ENCODE measurements at regions of chr9 and their contacts with region 1.

Region 1: DNA sequence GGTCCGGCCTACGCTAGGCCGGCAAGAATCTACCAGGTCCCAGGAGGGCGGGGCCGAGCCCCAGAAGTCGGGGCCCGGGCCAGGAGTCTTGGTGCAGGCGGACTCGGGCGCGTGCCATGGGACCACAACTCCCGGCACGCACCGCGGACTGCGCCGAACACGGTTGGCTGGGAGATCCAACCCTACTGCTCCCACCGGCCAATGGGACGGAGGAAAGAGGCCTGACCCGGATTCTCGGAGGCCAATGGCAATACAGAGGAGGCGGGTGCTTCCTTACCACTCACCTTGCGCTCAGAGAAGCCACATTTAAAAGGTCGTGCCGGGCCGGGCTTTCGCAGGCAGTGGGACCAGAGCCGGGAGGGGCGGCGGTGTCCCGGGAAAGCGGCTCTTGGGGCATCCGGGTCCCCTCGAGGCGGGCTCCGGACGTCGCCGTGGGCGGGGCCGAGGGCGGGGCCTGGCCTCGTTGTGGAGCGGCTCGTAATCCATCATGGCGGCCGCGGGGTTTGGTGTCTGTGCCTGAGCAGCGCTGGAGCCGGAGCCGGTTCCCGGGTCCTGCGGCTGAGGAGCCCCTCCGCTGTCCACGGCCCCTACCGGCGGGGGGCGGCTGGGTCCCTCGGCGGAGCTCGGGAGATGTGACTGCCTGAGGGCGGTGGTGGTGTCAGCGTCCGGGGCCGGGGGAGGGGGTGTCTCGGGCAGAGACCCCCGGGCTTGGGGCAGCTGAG is 19.1 kb downstream of the EXOSC2 start:
- DNase-seq: peak; percentile 98 to 99 (median 99)
- ATAC-seq: peak; percentile 97 to 99 (median 98)
- H3K4me3 ChIP-seq: peak overlapping the region; percentile 56 to 100 (median 84)
- H3K27ac ChIP-seq: peak overlapping the region; percentile 93 to 99 (median 98)
- H3K4me1 ChIP-seq: peaks cover 0 to 48% (median 28%) of the 10 kb centered on the region in 12 donors
- H3K27me3 ChIP-seq: no peaks in the 10 kb centered on the region
- CTCF ChIP-seq: no peak
- POLR2A ChIP-seq: peak in 1 of 2 donors; percentile 80

Region 2: GRCh38 chr9:129110740-129111527 is 1601.8 kb before region 1 on chr9 and contains the starts of genes CRAT and PTPA:
- intact Hi-C with region 1: loop called in 1 of 10 experiments (anchors 5 kb)
- DNase-seq: peak; percentile 98 to 99 (median 99)
- ATAC-seq: peak; percentile 90 to 94 (median 91)
- H3K4me3 ChIP-seq: peak within 1 kb of the TSS; percentile 77 to 100 (median 88)
- H3K27ac ChIP-seq: peak within 1 kb of the TSS; percentile 91 to 100 (median 97)
- H3K4me1 ChIP-seq: peaks cover 0 to 51% (median 26%) of the 10 kb centered on the region in 12 donors
- H3K27me3 ChIP-seq: no peaks in the 10 kb centered on the region
- CTCF ChIP-seq: no peak
- POLR2A ChIP-seq: peak; percentile 98 to 99
- total RNA-seq, gene CRAT: 50.8 to 126 (median 68.2) TPM
- total RNA-seq, gene PTPA: 96.0 to 212 (median 172) TPM

Region 3: GRCh38 chr9:130660683-130661450 is 51.9 kb before region 1 on chr9:
- intact Hi-C with region 1: no loop called
- DNase-seq: no peak
- ATAC-seq: no peak
- H3K4me3 ChIP-seq: peak overlapping the region; percentile 13 to 53 (median 40)
- H3K27ac ChIP-seq: no peak overlapping the region
- H3K4me1 ChIP-seq: peaks cover 2 to 66% (median 41%) of the 10 kb centered on the region in 12 donors
- H3K27me3 ChIP-seq: peaks cover 75 to 100% (median 94%) of the 10 kb centered on the region in 9 donors
- CTCF ChIP-seq: no peak
- POLR2A ChIP-seq: no peak

Region 4: DNA sequence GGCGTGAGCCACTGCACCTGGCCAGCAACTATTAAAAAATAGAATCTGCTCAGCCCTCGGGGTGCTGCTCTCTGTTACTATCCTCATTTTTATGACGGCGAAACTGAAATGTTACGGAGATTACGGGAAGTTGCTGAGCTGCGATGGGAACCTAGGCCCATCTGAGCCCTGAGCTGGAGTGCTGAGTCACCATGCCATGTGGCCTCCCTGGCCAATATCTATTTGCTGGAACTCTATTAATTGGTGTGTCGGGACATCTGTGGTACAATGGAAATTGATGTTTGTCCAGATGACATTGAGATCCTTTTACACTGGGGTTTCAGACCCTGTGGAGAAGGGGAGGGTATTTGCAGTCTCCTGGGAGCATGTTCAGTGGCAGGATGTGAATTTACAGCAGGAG is 40.3 kb before region 1 on chr9:
- intact Hi-C with region 1: no loop called
- DNase-seq: no peak
- ATAC-seq: no peak
- H3K4me3 ChIP-seq: no peak overlapping the region
- H3K27ac ChIP-seq: no peak overlapping the region
- H3K4me1 ChIP-seq: no peaks in the 10 kb centered on the region
- H3K27me3 ChIP-seq: peaks cover 0 to 13% (median 10%) of the 10 kb centered on the region in 9 donors
- CTCF ChIP-seq: no peak
- POLR2A ChIP-seq: no peak

Region 5: GRCh38 chr9:130770679-130771442 is 58.1 kb after region 1 on chr9:
- intact Hi-C with region 1: loop called in 8 of 10 experiments (anchors 5 to 10 kb)
- DNase-seq: no peak
- ATAC-seq: peak; percentile 38 to 77 (median 76)
- H3K4me3 ChIP-seq: no peak overlapping the region
- H3K27ac ChIP-seq: no peak overlapping the region
- H3K4me1 ChIP-seq: peaks cover 0 to 36% (median 20%) of the 10 kb centered on the region in 12 donors
- H3K27me3 ChIP-seq: no peaks in the 10 kb centered on the region
- CTCF ChIP-seq: peak; percentile 49 to 80 (median 68)
- POLR2A ChIP-seq: peak in 1 of 2 donors; percentile 25

Region 6: GRCh38 chr9:130834371-130835311 is 121.9 kb after region 1 on chr9 and contains the start of gene ABL1:
- intact Hi-C with region 1: loop called in 2 of 10 experiments (anchors 10 kb)
- DNase-seq: peak; percentile 80 to 88 (median 82)
- ATAC-seq: peak; percentile 69 to 92 (median 85)
- H3K4me3 ChIP-seq: peak within 1 kb of the TSS; percentile 38 to 92 (median 70)
- H3K27ac ChIP-seq: peak within 1 kb of the TSS; percentile 80 to 97 (median 94)
- H3K4me1 ChIP-seq: peaks cover 8 to 76% (median 57%) of the 10 kb centered on the region in 12 donors
- H3K27me3 ChIP-seq: no peaks in the 10 kb centered on the region
- CTCF ChIP-seq: peak in 1 of 12 donors; percentile 17
- POLR2A ChIP-seq: peak in 1 of 2 donors; percentile 14
- total RNA-seq, gene ABL1: 27.2 to 49.8 (median 34.1) TPM

Region 7: GRCh38 chr9:130866474-130866965 is 153.8 kb after region 1 on chr9:
- intact Hi-C with region 1: loop called in 9 of 10 experiments (anchors 1 to 5 kb)
- DNase-seq: peak in 4 of 5 donors; percentile 61 to 72 (median 66)
- ATAC-seq: peak; percentile 29 to 50 (median 38)
- H3K4me3 ChIP-seq: no peak overlapping the region
- H3K27ac ChIP-seq: peak overlapping the region in 1 of 12 donors; percentile 20
- H3K4me1 ChIP-seq: peaks cover 3 to 55% (median 28%) of the 10 kb centered on the region in 12 donors
- H3K27me3 ChIP-seq: no peaks in the 10 kb centered on the region
- CTCF ChIP-seq: peak; percentile 66 to 86 (median 79)
- POLR2A ChIP-seq: no peak